Colonic mucosa (tissue), 4 donors: ENCODE measurements at regions of chr1 and their contacts with region 1.

Region 1: GRCh38 chr1:91885716-91886506 is at the start of gene TGFBR3:
- DNase-seq: peak; percentile 88
- H3K4me3 ChIP-seq: peak within 1 kb of the TSS; percentile 72
- H3K27ac ChIP-seq: peak within 1 kb of the TSS; percentile 81
- H3K4me1 ChIP-seq: no peaks in the 10 kb centered on the region
- H3K27me3 ChIP-seq: no peaks in the 10 kb centered on the region
- CTCF ChIP-seq: peak; percentile 31
- total RNA-seq, gene TGFBR3: 8.4 to 16.0 TPM

Region 2: DNA sequence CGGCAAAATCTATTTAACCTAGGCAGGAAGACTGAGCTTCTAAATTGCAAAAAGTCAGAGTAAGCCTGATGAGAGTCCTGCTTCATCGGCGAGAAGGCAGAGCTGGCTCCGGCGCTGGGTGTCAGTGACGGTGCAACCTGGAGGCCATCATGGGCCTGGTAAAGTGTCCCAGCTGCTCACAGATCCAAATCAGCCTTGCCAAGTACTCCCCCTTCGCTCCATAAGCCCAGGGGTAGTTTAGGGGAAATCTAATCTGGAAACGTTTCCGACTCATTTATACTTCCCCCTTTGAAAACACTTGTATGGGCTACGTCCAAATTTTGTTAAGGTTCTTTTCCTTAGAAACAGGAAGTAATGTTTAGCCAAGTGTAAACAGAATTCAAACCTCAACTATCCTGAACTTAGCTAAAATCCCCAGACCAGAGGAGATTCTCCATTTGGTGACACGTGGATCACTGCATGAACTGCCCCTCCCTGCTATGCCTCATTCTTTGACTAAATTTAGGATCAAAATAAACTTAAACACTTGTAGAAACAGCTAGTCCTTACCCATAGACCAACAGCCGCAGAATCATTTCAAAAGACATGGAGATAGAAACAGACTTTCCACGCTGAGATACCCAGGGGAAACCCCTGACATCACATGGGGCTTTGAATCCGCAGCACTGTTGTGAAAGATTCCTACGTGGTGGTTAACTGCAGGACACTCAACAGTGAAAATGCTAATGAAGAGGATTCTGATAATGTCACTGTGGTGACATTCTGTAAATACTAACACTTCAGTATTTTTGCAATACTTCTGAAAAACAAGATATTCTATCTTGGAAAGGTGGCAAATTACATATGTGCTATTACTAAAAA is 172.7 kb before region 1 on chr1:
- intact Hi-C with region 1: loop called (anchors 10 kb)
- DNase-seq: peak; percentile 41
- H3K4me3 ChIP-seq: no peak overlapping the region
- H3K27ac ChIP-seq: peak overlapping the region; percentile 42
- H3K4me1 ChIP-seq: no peaks in the 10 kb centered on the region
- H3K27me3 ChIP-seq: no peaks in the 10 kb centered on the region
- CTCF ChIP-seq: no peak